Mammary epithelial cell (primary cell): ENCODE measurements at regions of chr1 and their contacts with region 1.

Region 1: GRCh38 chr1:10459181-10459580 is 9.3 kb downstream of the CORT start:
- DNase-seq: peak; percentile 78
- H3K4me3 ChIP-seq: no peak overlapping the region
- H3K27ac ChIP-seq: no peak overlapping the region
- H3K4me1 ChIP-seq: peaks cover 30% of the 10 kb centered on the region
- H3K27me3 ChIP-seq: no peaks in the 10 kb centered on the region
- CTCF ChIP-seq: no peak

Region 2: DNA sequence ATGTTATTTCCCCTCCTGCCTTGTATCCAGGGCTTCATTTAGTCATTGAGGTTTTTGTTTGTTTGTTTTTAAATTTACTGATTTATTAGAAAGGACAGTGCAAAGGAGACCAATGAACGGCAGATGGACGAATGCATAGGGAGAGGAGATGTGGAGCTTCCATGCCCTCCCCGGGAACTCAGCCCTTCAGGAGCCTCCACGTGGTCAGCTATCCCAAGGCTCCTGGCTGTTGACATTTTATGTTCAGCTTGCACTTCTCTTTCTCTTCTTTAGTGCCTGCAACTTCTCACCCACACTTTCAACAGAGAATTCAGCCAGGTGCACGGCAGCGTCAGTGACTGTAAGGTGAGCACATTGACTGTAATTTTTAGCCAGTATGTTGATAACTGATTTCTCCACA is 91.0 kb before region 1 on chr1:
- CTCF ChIA-PET with region 1: no interaction called
- dilution Hi-C with region 1: loop called (anchors 5 kb)
- in situ Hi-C with region 1: no loop called
- intact Hi-C with region 1: no loop called
- DNase-seq: no peak
- H3K4me3 ChIP-seq: no peak overlapping the region
- H3K27ac ChIP-seq: no peak overlapping the region
- H3K4me1 ChIP-seq: no peaks in the 10 kb centered on the region
- H3K27me3 ChIP-seq: no peaks in the 10 kb centered on the region
- CTCF ChIP-seq: no peak

Region 3: DNA sequence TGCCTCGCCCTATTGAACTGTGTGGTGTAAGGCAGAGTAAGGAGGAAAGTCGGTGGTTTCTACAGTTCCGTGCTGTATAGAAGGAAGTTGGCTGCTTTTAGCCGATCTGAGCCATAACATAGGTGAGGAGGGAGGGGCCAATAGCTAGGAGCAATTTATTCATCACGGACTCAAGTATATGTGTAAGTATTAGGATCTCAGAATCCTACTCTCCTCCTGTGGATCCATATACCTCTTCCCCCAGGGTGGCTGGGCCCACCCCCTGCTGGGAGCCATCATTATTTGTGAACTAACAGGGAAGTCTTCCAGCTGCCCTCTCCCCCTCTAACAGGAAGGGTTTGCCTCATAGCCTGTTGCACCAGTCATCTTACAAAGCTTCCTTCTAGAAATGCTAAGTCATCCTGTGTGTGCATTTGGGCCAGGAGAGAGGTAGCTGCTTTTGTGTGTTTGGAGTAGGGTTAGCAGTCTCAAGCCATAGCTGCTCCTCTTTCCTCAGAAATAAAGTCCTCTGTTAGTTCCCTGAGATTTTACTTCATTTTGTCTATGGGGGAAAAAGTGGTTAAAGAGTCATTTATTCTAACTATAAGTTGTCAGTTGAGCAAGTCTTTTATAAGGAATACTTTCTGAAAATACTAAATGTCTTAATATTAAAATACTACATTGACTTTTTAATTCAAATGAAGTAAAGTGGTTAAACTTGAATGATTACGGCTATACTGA is 43.8 kb before region 1 on chr1:
- CTCF ChIA-PET with region 1: no interaction called
- dilution Hi-C with region 1: loop called (anchors 5 kb)
- in situ Hi-C with region 1: no loop called
- intact Hi-C with region 1: no loop called
- DNase-seq: no peak
- H3K4me3 ChIP-seq: no peak overlapping the region
- H3K27ac ChIP-seq: no peak overlapping the region
- H3K4me1 ChIP-seq: no peaks in the 10 kb centered on the region
- H3K27me3 ChIP-seq: no peaks in the 10 kb centered on the region
- CTCF ChIP-seq: no peak

Region 4: DNA sequence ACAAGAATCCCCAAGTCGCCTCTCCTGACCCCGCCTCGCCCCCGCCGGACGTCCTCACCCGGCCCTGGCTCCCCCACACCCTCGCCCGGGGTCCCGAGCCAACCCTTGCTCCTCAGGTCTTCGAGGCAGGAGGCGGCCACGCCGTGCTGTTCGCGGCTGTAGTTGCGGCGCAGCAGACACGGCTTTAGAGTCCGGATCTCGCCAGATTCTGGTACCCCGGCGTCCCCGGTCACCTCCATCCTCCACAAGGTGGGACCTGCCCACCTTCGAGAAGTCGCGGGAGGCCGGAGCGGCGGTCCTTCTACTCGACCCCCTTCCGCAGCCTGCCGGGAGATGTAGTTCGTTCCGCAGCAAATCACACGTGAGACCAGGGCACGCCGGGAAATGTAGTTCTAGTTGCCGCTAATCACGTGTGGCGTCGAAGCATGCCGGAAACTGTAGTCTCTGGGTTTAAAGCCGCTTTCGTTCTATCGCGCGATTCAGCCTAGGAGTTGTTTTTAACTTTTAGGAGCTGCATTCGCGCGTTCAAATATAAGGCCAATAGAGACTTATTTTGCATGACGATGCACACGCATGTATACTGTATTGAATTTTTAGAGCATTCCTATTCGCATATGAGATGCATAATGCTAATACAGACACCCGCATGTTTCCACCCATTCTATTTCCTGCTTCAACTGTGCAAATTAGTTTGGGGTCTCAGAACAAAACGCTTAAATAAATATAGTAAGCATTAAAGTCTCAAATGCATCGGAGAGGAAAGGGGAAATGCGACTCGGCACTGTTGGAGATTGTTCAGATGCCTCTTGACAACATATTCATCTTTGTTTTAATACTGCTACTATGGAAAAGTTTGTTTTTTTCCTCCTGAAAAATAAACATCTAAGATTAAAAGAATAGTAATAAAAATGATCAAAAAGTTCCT is 13.3 kb after region 1 on chr1 and contains the start of gene DFFA:
- CTCF ChIA-PET with region 1: no interaction called
- dilution Hi-C with region 1: no loop called
- in situ Hi-C with region 1: no loop called
- intact Hi-C with region 1: loop called (anchors 2 kb)
- DNase-seq: peak; percentile 94
- H3K4me3 ChIP-seq: peak within 1 kb of the TSS; percentile 70 to 80 (median 74)
- H3K27ac ChIP-seq: peak within 1 kb of the TSS; percentile 52
- H3K4me1 ChIP-seq: peaks cover 5% of the 10 kb centered on the region
- H3K27me3 ChIP-seq: no peaks in the 10 kb centered on the region
- CTCF ChIP-seq: no peak
- total RNA-seq, gene DFFA: 49.8 to 71.8 TPM

Region 5: DNA sequence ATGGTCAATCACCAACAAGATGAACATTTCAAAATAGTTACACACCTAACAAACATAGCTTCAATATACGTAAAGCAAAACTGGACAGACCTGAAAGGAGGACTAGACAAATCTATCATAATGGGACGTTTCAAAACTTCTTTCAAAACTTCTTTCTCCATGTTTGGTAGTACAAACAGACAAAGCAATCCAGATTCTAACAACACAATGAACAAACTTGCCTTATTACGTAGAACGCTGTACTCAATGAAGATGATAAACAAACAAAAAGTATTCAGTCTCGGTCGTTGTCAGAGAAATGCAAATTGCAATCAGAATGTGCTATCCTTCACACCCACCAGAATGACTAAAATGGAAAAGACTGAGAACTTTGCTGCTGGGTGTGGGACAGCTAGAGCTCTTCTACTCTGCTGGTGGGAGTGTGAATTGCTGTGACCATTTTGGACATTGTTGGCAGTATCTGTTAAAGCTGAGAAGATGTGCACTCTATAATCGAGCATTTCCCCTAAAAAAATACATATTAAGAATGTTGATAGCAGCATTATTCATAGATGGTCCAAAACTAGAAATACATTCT is 126.9 kb after region 1 on chr1:
- CTCF ChIA-PET with region 1: no interaction called
- dilution Hi-C with region 1: loop called (anchors 10 kb)
- in situ Hi-C with region 1: no loop called
- intact Hi-C with region 1: no loop called
- DNase-seq: no peak
- H3K4me3 ChIP-seq: no peak overlapping the region
- H3K27ac ChIP-seq: no peak overlapping the region
- H3K4me1 ChIP-seq: no peaks in the 10 kb centered on the region
- H3K27me3 ChIP-seq: no peaks in the 10 kb centered on the region
- CTCF ChIP-seq: peak in 1 of 2 donors; percentile 4